ENCODE measurements at regions of chr15 and their contacts with region 1.

Region 1: DNA sequence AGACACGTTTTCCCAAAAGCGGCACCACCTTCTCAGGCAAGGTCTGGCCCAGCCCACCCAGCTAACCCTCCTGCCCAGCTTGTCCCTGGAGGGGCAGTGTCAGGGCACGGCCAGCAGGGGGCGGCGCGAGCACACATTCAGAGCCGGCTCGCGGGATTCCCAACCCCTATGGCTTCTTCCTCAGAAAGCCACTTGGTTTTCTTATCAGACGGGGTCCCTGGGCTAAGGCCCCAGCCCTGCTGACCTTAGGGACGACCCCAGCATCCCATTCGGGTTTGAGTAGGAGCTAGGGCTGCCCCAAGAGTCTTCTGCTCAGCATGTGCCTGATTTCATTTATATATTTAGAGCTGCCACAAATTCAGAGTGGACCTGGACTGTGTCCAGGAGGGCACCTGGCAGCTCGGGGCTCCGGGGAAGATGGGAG is 14.5 kb downstream of the RLBP1 start:
- DNase-seq: peak; percentile 50 to 96
- H3K4me3 ChIP-seq: no peak overlapping the region
- H3K27ac ChIP-seq: no peak overlapping the region
- H3K4me1 ChIP-seq: no peaks in the 10 kb centered on the region; a peak in 2 of 7 replicates
- H3K27me3 ChIP-seq: no peaks in the 10 kb centered on the region; a peak in 1 of 7 replicates
- CTCF ChIP-seq: peak; percentile 96 to 98 (median 97)
- EP300 ChIP-seq: no peak
- POLR2A ChIP-seq: no peak
- RAD21 ChIP-seq: peak; percentile 92 to 96

Region 2: GRCh38 chr15:89119489-89120123 is 87.3 kb before region 1 on chr15:
- CTCF ChIA-PET with region 1: no interaction called
- POLR2A ChIA-PET with region 1: no interaction called
- DNase-seq: no peak
- H3K4me3 ChIP-seq: no peak overlapping the region
- H3K27ac ChIP-seq: no peak overlapping the region
- H3K4me1 ChIP-seq: peaks cover 11 to 21% (median 17%) of the 10 kb centered on the region in 4 experiments
- H3K27me3 ChIP-seq: no peaks in the 10 kb centered on the region
- CTCF ChIP-seq: no peak
- EP300 ChIP-seq: no peak
- POLR2A ChIP-seq: no peak
- RAD21 ChIP-seq: no peak

Region 3: GRCh38 chr15:89221543-89221942 is 14.6 kb after region 1 on chr15 and contains the start of gene RLBP1:
- CTCF ChIA-PET with region 1: interaction called, 27 read pairs
- POLR2A ChIA-PET with region 1: interaction called, 4 read pairs
- DNase-seq: no peak
- H3K4me3 ChIP-seq: no peak within 1 kb of the TSS
- H3K27ac ChIP-seq: no peak within 1 kb of the TSS
- H3K4me1 ChIP-seq: no peaks in the 10 kb centered on the region; a peak in 2 of 7 replicates
- H3K27me3 ChIP-seq: no peaks in the 10 kb centered on the region
- CTCF ChIP-seq: no peak
- EP300 ChIP-seq: no peak
- POLR2A ChIP-seq: no peak
- RAD21 ChIP-seq: no peak
- total RNA-seq, gene RLBP1: not detected in 2 replicates

Region 4: DNA sequence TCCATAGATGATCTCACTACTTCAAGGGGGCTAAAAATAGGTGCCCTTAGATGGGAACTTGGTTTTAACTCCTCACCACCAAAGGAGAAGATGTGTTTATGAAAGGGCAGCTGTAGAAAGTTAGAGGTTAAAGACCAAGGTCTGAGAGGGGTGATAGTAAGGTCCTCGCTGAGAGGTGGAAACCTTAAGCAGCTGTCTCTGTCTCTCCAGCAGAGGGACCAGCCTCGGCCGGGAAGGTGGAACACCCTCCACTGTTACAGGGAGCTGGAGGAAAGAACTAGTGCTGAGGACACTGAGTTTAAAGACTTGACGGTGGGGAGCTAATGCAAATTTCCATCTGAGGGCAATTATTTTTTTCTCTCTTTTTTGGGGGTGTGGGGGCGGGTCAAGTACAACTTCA is 23.4 kb after region 1 on chr15:
- CTCF ChIA-PET with region 1: interaction called, 17 read pairs
- POLR2A ChIA-PET with region 1: interaction called, 4 read pairs
- DNase-seq: no peak
- H3K4me3 ChIP-seq: no peak overlapping the region
- H3K27ac ChIP-seq: no peak overlapping the region
- H3K4me1 ChIP-seq: no peaks in the 10 kb centered on the region; a peak in 1 of 7 replicates
- H3K27me3 ChIP-seq: no peaks in the 10 kb centered on the region
- CTCF ChIP-seq: peak in 2 of 3 experiments; percentile 20 to 21; a peak in 2 of 4 replicates
- EP300 ChIP-seq: no peak
- POLR2A ChIP-seq: no peak
- RAD21 ChIP-seq: no peak

Region 5: GRCh38 chr15:89243691-89244471 is 37.0 kb after region 1 on chr15 and contains the start of gene FANCI:
- CTCF ChIA-PET with region 1: interaction called, 36 read pairs
- POLR2A ChIA-PET with region 1: interaction called, 3 read pairs
- DNase-seq: peak; percentile 89 to 97
- H3K4me3 ChIP-seq: peak within 1 kb of the TSS; percentile 79 to 96 (median 94)
- H3K27ac ChIP-seq: peak within 1 kb of the TSS; percentile 30
- H3K4me1 ChIP-seq: peaks cover 0 to 9% (median 3%) of the 10 kb centered on the region in 4 experiments; a peak in 5 of 7 replicates
- H3K27me3 ChIP-seq: peaks cover 0 to 2% (median 0%) of the 10 kb centered on the region in 4 experiments; a peak in 3 of 7 replicates
- CTCF ChIP-seq: peak; percentile 67 to 69 (median 67)
- EP300 ChIP-seq: peak; percentile 19 to 98
- POLR2A ChIP-seq: peak; percentile 26 to 63; a peak in 2 of 3 replicates
- RAD21 ChIP-seq: peak; percentile 62 to 65
- total RNA-seq, gene FANCI: 115 and 117 TPM in 2 replicates

Region 6: GRCh38 chr15:89278307-89278706 is 71.4 kb after region 1 on chr15:
- CTCF ChIA-PET with region 1: interaction called, 14 read pairs
- POLR2A ChIA-PET with region 1: no interaction called
- DNase-seq: no peak
- H3K4me3 ChIP-seq: no peak overlapping the region
- H3K27ac ChIP-seq: no peak overlapping the region
- H3K4me1 ChIP-seq: no peaks in the 10 kb centered on the region
- H3K27me3 ChIP-seq: no peaks in the 10 kb centered on the region
- CTCF ChIP-seq: no peak
- EP300 ChIP-seq: no peak
- POLR2A ChIP-seq: no peak
- RAD21 ChIP-seq: no peak